Activated naive CD4-positive, alpha-beta T cell treated with anti-CD3 and anti-CD28 coated beads for 36 hours (primary cell): ENCODE measurements at regions of chr21 and their contacts with region 1.

Region 1: DNA sequence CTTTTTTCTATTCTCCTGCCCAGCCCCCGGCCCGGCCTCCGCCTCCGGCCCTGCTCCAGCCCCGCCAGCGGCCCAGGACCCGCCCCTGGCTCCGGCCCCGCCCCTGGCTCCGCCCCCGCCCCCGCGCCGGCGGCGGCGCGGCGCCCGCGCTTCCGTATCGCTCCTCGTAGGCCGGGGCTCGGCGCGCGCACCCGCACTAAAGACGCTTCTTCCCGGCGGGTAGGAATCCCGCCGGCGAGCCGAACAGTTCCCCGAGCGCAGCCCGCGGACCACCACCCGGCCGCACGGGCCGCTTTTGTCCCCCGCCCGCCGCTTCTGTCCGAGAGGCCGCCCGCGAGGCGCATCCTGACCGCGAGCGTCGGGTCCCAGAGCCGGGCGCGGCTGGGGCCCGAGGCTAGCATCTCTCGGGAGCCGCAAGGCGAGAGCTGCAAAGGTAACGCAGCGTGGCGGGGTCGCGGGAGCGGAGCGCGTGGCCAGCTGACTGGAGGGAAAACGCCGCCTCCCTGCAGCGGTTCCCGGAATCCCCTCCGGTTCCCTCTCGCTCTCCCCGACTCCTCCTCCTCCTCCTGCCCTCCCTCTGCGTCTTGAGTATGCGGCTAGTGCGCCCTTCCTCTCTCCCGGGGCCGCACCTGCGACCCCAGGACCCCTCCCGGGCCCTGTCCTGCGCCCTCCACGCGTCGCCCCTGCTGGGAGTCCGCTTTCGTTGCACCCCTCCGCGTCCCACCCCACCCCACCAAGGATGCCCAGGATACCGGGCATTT is at the start of gene IFNAR2:
- DNase-seq: peak; percentile 73
- H3K4me3 Mint-ChIP-seq: peak within 1 kb of the TSS; percentile 89
- H3K27ac Mint-ChIP-seq: peak within 1 kb of the TSS; percentile 92
- H3K4me1 Mint-ChIP-seq: peaks cover 52% of the 10 kb centered on the region
- H3K27me3 Mint-ChIP-seq: no peaks in the 10 kb centered on the region
- total RNA-seq, gene IFNAR2: 16.6 to 19.4 TPM

Region 2: GRCh38 chr21:33205476-33205875 is 24.5 kb before region 1 on chr21:
- CTCF ChIA-PET with region 1: no interaction called
- intact Hi-C with region 1: loop called (anchors 1 kb)
- DNase-seq: peak; percentile 42
- H3K4me3 Mint-ChIP-seq: no peak overlapping the region
- H3K27ac Mint-ChIP-seq: peak overlapping the region; percentile 5
- H3K4me1 Mint-ChIP-seq: peaks cover 39% of the 10 kb centered on the region
- H3K27me3 Mint-ChIP-seq: no peaks in the 10 kb centered on the region

Region 3: GRCh38 chr21:33244082-33244778 is 14.3 kb after region 1 on chr21:
- CTCF ChIA-PET with region 1: interaction called, 3 read pairs
- intact Hi-C with region 1: loop called (anchors 1 kb)
- DNase-seq: no peak
- H3K4me3 Mint-ChIP-seq: peak overlapping the region; percentile 62
- H3K27ac Mint-ChIP-seq: peak overlapping the region; percentile 90
- H3K4me1 Mint-ChIP-seq: peaks cover 86% of the 10 kb centered on the region
- H3K27me3 Mint-ChIP-seq: no peaks in the 10 kb centered on the region

Region 4: DNA sequence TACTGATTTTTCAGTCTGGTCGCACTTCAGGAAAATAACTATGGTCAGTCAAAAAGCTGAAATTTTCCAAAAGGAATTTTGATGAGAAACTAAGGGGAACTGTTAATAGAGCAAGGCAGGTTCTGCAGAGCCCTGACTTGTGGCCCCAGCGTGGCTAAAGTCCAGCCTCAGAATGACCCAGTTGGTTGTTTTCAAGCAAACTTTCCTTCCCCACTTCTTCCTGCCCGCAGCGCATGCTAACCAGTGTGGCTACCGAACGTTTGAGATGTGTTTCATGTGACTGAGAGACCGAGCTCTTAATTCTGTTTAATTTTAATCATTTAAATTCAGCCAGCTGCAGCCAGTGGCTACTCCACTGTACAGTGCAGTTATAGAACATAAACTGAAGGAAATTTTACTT is 30.0 kb after region 1 on chr21:
- CTCF ChIA-PET with region 1: no interaction called
- intact Hi-C with region 1: loop called (anchors 1 kb)
- DNase-seq: no peak
- H3K4me3 Mint-ChIP-seq: no peak overlapping the region
- H3K27ac Mint-ChIP-seq: no peak overlapping the region
- H3K4me1 Mint-ChIP-seq: peaks cover 57% of the 10 kb centered on the region
- H3K27me3 Mint-ChIP-seq: no peaks in the 10 kb centered on the region

Region 5: GRCh38 chr21:33266050-33266788 is 36.3 kb after region 1 on chr21 and contains the start of gene IL10RB:
- CTCF ChIA-PET with region 1: interaction called, 4 read pairs
- intact Hi-C with region 1: loop called (anchors 1 kb)
- DNase-seq: peak; percentile 65
- H3K4me3 Mint-ChIP-seq: peak within 1 kb of the TSS; percentile 99
- H3K27ac Mint-ChIP-seq: peak within 1 kb of the TSS; percentile 95
- H3K4me1 Mint-ChIP-seq: peaks cover 49% of the 10 kb centered on the region
- H3K27me3 Mint-ChIP-seq: no peaks in the 10 kb centered on the region
- total RNA-seq, gene IL10RB: 23.9 TPM

Region 6: GRCh38 chr21:33434770-33435360 is 204.9 kb after region 1 on chr21:
- CTCF ChIA-PET with region 1: no interaction called
- intact Hi-C with region 1: loop called (anchors 1 kb)
- DNase-seq: peak; percentile 43
- H3K4me3 Mint-ChIP-seq: peak overlapping the region; percentile 25
- H3K27ac Mint-ChIP-seq: peak overlapping the region; percentile 76
- H3K4me1 Mint-ChIP-seq: peaks cover 29% of the 10 kb centered on the region
- H3K27me3 Mint-ChIP-seq: no peaks in the 10 kb centered on the region